ENCODE measurements at regions of chr15 and their contacts with region 1.

Region 1: DNA sequence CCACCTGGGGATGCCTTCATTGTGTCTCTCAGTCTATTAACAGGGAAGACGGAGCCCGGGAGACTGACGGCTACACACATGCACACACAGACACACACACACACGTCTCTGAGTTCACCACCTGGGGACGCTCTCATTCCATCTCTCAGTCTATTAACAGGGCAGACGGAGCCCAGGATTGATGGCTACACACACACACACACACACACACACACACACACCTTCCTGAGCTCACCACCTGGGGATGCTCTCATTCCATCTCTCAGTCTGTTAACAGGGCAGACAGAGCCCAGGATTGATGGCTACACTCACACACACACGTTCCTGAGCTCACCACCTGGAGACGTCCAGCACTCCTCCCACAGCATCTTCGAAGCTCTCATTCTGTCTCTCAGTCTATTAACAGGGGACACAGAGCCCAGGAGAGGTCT is 143.9 kb downstream of the OR4M2 start:
- DNase-seq: no peak
- ATAC-seq: no peak
- H3K4me3 ChIP-seq: no peak overlapping the region
- H3K27ac ChIP-seq: no peak overlapping the region
- H3K4me1 ChIP-seq: no peaks in the 10 kb centered on the region
- H3K27me3 ChIP-seq: no peaks in the 10 kb centered on the region; a peak in 1 of 4 replicates
- CTCF ChIP-seq: no peak
- EP300 ChIP-seq: no peak
- POLR2A ChIP-seq: no peak
- RAD21 ChIP-seq: no peak

Region 2: GRCh38 chr15:20356444-20356910 is 1867.8 kb before region 1 on chr15:
- CTCF ChIA-PET with region 1: interaction called, 35 read pairs
- POLR2A ChIA-PET with region 1: no interaction called
- RAD21 ChIA-PET with region 1: interaction called, 12 read pairs
- SMC1A ChIA-PET with region 1: interaction called, 10 read pairs
- in situ Hi-C with region 1: no loop called
- intact Hi-C with region 1: no loop called
- DNase-seq: no peak
- ATAC-seq: peak; percentile 81
- H3K4me3 ChIP-seq: no peak overlapping the region
- H3K27ac ChIP-seq: no peak overlapping the region
- H3K4me1 ChIP-seq: no peaks in the 10 kb centered on the region; the same call in 1 of the 2 replicates
- H3K27me3 ChIP-seq: no peaks in the 10 kb centered on the region; a peak in 1 of 4 replicates
- CTCF ChIP-seq: peak; percentile 52 to 70 (median 68)
- EP300 ChIP-seq: no peak
- POLR2A ChIP-seq: no peak
- RAD21 ChIP-seq: peak; percentile 71

Measured in GM12878 (cell line).